ENCODE measurements at regions of chr13 and their contacts with region 1.

Region 1: GRCh38 chr13:99436686-99437416 is 64.4 kb upstream of the TM9SF2 start:
- DNase-seq: peak; percentile 86
- H3K4me3 ChIP-seq: peak overlapping the region; percentile 2 to 55; a peak in 3 of 4 replicates
- H3K27ac ChIP-seq: no peak overlapping the region
- H3K4me1 ChIP-seq: peaks cover 3 to 10% of the 10 kb centered on the region in 2 experiments; a peak in 2 of 4 replicates
- H3K27me3 ChIP-seq: peaks cover 7% of the 10 kb centered on the region; the same call in 1 of the 2 replicates
- CTCF ChIP-seq: peak; percentile 100
- EP300 ChIP-seq: no peak
- RAD21 ChIP-seq: peak; percentile 83

Region 2: DNA sequence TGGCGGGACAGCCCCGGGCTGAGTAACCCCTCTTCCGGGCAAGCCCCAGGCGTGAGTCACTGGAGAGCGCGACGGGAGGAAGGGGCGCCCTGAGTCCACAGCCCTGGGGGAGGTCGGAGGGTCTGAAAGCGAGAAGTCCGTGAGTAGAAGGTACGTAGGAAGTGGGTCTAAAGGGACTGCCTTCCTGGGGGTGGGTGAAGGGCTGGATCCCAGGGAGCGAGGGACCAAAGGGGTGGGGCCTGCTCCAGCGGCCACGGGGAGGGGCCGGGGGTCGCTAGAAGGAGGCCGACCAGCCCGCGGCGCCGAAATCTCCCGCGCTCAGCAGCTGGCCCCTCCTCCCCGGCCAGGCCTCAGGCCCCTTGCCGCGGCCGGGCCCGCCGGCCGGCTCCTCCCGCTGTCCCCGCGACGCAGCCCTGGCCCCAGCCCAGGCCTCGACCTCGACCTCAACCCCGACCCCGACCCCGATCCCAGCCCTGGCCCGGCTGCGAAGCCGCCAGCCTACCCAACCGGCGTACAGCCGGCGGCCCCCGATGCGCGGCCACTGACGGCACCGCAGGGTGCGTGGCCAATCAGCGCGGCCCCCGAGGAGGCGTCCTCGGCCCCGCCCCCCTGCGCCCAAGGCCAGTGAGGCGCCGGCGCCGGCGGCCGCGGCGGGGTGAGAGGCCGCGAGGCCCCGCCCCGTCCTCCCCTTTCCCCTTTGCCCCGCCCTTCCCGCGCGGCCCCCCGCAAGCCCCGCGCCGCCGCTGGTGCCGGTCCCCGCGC is 1460.8 kb before region 1 on chr13:
- CTCF ChIA-PET with region 1: no interaction called
- POLR2A ChIA-PET with region 1: no interaction called
- DNase-seq: peak; percentile 98
- H3K4me3 ChIP-seq: peak overlapping the region; percentile 59 to 81
- H3K27ac ChIP-seq: peak overlapping the region; percentile 87
- H3K4me1 ChIP-seq: peaks cover 9 to 16% of the 10 kb centered on the region in 2 experiments; a peak in 3 of 4 replicates
- H3K27me3 ChIP-seq: no peaks in the 10 kb centered on the region
- CTCF ChIP-seq: no peak
- EP300 ChIP-seq: no peak
- RAD21 ChIP-seq: no peak

Region 3: DNA sequence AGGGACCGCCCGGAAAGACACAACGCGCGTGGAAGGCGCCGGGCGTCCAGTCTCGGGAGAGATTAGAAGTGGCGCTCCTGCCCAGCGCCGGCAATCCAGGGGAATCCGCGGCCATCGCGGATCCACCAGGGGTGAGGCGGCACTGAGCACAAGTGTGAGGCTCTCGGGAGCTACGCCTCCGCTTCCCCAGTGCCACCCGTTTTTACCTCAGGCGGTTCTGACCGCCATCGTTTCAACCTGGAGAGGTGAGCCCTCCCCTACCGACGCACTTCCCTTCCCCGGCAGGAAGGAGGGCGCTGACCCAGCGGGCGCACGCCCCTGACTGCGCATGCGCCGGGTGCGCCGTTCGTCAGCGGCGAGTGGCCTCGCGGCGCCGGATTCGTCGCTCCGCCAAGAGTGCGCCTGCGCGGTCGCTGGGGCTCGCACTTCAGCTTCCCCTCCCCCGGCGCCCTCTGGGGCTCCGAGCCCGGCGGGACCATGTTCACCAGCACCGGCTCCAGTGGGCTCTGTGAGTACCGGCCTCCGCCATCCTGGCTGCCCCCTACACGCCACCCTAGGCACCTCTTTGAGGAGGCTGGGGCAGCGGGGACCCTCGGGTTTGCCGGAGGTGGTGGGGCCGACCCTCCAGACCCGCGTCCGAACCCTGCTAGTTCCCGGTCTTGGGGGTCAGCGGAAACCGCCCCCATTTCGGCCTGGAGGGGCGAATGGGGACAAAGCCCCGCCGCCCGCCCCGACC is 236.3 kb before region 1 on chr13 and contains the start of gene UBAC2:
- CTCF ChIA-PET with region 1: interaction called, 38 read pairs
- POLR2A ChIA-PET with region 1: interaction called, 3 read pairs
- DNase-seq: peak; percentile 99
- H3K4me3 ChIP-seq: peak within 1 kb of the TSS; percentile 95 to 98
- H3K27ac ChIP-seq: peak within 1 kb of the TSS; percentile 88 to 89
- H3K4me1 ChIP-seq: peaks cover 0 to 6% of the 10 kb centered on the region in 2 experiments; a peak in 2 of 4 replicates
- H3K27me3 ChIP-seq: no peaks in the 10 kb centered on the region
- CTCF ChIP-seq: peak; percentile 10; the same call in 1 of the 2 replicates
- EP300 ChIP-seq: no peak
- RAD21 ChIP-seq: no peak
- polyA plus RNA-seq, gene UBAC2: 79.0 and 97.4 TPM in 2 replicates

Region 4: GRCh38 chr13:99269627-99270241 is 167.1 kb before region 1 on chr13:
- CTCF ChIA-PET with region 1: interaction called, 249 read pairs
- POLR2A ChIA-PET with region 1: no interaction called
- DNase-seq: peak; percentile 17
- H3K4me3 ChIP-seq: no peak overlapping the region; a peak in 1 of 4 replicates
- H3K27ac ChIP-seq: no peak overlapping the region
- H3K4me1 ChIP-seq: no peaks in the 10 kb centered on the region
- H3K27me3 ChIP-seq: no peaks in the 10 kb centered on the region
- CTCF ChIP-seq: peak; percentile 90
- EP300 ChIP-seq: no peak
- RAD21 ChIP-seq: peak; percentile 85

Region 5: GRCh38 chr13:99290894-99291293 is 146.0 kb before region 1 on chr13:
- CTCF ChIA-PET with region 1: interaction called, 10 read pairs
- POLR2A ChIA-PET with region 1: no interaction called
- DNase-seq: no peak
- H3K4me3 ChIP-seq: no peak overlapping the region
- H3K27ac ChIP-seq: no peak overlapping the region
- H3K4me1 ChIP-seq: peaks cover under 1 to 5% of the 10 kb centered on the region in 2 experiments; a peak in 1 of 4 replicates
- H3K27me3 ChIP-seq: no peaks in the 10 kb centered on the region
- CTCF ChIP-seq: no peak
- EP300 ChIP-seq: no peak
- RAD21 ChIP-seq: no peak

Region 6: DNA sequence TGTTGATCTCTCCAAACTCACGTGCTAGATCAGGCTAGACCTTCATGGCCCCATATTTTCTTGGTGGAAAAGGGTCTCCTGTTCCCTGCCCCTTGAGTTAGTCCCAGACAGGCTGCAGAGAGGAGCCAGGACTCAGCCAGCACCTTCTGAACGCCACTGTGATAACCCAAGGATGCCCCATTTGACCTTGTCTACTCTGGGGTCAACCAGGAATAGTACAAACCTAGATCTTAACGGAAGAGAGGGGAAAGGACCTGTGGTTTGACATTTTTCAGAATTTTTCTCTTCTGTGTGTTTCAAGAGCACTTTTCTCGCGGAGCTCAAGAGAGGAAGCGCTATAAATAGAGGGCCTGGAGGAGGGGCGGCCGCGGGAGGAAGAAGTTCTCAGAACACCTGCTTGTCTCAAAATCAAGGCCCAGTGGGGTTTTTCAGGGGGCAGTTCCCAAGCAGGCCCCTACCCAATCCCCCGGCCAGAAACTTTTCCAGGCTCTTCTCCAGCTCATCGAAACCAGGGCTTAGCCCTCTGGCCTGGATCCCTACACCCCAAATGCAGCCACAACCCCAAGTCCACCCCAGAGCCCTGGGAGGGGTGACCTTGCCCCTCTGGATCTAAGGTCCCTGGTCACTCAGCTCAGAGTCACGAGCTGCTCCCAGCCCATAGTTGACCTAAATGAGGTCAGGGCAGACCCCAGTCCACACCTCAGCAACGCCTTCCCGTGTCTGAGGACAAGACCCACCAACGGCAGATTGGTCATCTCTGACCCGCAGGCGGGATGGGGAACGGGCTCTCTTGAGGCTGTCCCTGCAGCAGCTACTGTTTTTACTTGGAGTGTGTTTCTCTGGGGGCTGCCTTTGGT is 11.1 kb before region 1 on chr13:
- CTCF ChIA-PET with region 1: interaction called, 33 read pairs
- POLR2A ChIA-PET with region 1: no interaction called
- DNase-seq: no peak
- H3K4me3 ChIP-seq: no peak overlapping the region
- H3K27ac ChIP-seq: no peak overlapping the region
- H3K4me1 ChIP-seq: no peaks in the 10 kb centered on the region
- H3K27me3 ChIP-seq: no peaks in the 10 kb centered on the region; the same call in 1 of the 2 replicates
- CTCF ChIP-seq: no peak
- EP300 ChIP-seq: no peak
- RAD21 ChIP-seq: no peak

Measured in SK-N-SH (cell line).